Caco-2 (cell line): ENCODE measurements at regions of chr2 and their contacts with region 1.

Region 1: DNA sequence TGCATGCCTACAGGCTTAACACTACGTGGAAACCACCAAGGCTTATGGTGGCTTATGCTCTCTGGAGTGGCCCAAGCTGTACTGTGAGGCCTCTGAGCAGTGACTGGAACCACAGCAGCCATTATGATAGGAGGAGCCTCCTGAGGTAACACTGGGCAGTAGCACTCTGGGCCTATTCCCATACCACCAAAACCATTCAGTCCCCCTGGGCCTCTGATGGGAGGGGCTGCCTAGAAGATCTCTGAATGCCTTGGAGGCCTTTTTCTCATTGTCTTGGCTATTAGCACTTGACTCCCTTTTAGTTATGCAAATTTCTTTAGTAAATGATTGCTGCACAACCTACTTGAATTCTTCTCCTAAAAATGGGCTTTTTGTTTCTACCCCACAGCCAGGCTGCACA is 985.0 kb downstream of the DPP10 start:
- DNase-seq: no peak
- H3K4me3 ChIP-seq: no peak overlapping the region
- H3K4me3 Mint-ChIP-seq: no peak overlapping the region
- H3K27ac Mint-ChIP-seq: no peak overlapping the region
- H3K4me1 ChIP-seq: no peaks in the 10 kb centered on the region
- H3K4me1 Mint-ChIP-seq: no peaks in the 10 kb centered on the region
- H3K27me3 ChIP-seq: no peaks in the 10 kb centered on the region
- H3K27me3 Mint-ChIP-seq: peaks cover 8% of the 10 kb centered on the region
- CTCF ChIP-seq: no peak

Region 2: DNA sequence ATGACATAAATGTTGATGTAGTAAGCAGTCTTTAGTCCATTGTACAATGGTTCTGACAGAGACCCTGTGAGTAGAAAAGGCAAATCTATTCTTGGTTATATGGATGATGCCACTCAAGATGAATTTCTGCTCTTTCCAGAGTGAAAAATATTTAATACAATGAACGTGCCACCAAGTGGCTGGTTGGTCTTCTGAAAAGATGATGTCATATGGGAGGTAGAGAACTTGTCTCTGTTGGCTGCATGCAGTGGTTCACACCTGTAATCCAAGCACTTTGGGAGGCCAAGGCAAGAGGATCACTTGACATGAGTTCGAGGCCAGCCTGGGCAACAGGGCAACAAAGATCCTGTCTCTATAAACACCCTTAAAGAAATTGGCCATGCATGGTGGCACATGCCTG is 327.5 kb before region 1 on chr2:
- CTCF ChIA-PET with region 1: no interaction called
- POLR2A ChIA-PET with region 1: no interaction called
- intact Hi-C with region 1: loop called (anchors 5 kb)
- DNase-seq: no peak
- H3K4me3 ChIP-seq: no peak overlapping the region
- H3K4me3 Mint-ChIP-seq: no peak overlapping the region
- H3K27ac Mint-ChIP-seq: no peak overlapping the region
- H3K4me1 ChIP-seq: no peaks in the 10 kb centered on the region
- H3K4me1 Mint-ChIP-seq: no peaks in the 10 kb centered on the region
- H3K27me3 ChIP-seq: no peaks in the 10 kb centered on the region
- H3K27me3 Mint-ChIP-seq: no peaks in the 10 kb centered on the region
- CTCF ChIP-seq: no peak

Region 3: DNA sequence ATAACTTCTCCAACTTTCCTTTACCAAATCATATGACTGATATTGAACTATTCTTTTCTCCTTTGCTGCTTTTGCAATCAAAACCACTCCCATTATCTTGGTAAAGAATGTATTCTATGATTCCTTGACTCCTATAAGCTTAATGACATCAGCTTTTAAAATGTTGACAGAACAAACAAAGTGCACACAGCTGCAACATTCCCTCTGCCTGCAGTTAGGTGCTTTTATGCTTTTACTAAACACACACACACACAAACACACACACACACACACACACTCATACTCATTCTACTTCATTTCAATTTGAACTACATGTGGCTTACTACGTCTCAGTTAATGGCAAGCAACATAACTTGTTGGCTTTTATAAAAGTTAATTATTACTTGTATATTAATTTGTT is 38.4 kb before region 1 on chr2:
- CTCF ChIA-PET with region 1: no interaction called
- POLR2A ChIA-PET with region 1: no interaction called
- intact Hi-C with region 1: no loop called
- DNase-seq: no peak
- H3K4me3 ChIP-seq: no peak overlapping the region
- H3K4me3 Mint-ChIP-seq: no peak overlapping the region
- H3K27ac Mint-ChIP-seq: no peak overlapping the region
- H3K4me1 ChIP-seq: no peaks in the 10 kb centered on the region
- H3K4me1 Mint-ChIP-seq: no peaks in the 10 kb centered on the region
- H3K27me3 ChIP-seq: no peaks in the 10 kb centered on the region
- H3K27me3 Mint-ChIP-seq: no peaks in the 10 kb centered on the region
- CTCF ChIP-seq: no peak

Region 4: DNA sequence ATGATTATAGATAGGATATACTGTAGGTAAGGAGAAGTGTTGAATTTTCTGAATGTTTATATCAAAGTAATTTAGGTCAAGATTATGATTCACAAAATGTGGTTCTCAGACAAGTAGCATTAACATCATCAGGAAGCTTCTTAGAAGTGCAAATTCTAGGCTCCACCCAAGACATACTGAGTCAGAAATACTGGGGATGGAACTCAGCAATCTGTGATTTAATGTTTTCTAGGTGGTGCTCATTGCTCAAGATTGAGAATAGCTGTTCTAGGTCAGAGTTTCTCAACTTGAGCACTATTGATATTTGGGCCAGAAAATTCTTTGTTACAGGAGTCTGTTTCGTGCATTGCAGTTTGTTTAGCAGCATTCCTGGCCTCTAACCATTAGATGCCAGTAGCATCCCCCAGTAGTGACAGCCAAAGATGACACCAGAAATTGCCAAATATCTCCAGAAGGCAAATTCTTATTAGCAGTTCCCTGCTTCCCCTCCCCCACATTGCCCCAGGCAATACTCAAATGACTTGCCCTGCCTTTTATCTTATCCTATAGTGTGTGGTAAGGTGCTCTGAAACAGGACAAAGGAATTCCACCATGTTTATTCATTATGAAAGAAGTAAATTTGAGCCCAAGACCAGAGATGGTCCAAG is 16.2 kb after region 1 on chr2:
- CTCF ChIA-PET with region 1: no interaction called
- POLR2A ChIA-PET with region 1: no interaction called
- intact Hi-C with region 1: no loop called
- DNase-seq: peak; percentile 35 to 62
- H3K4me3 ChIP-seq: no peak overlapping the region
- H3K4me3 Mint-ChIP-seq: no peak overlapping the region
- H3K27ac Mint-ChIP-seq: no peak overlapping the region
- H3K4me1 ChIP-seq: 0 out of 2 replicates have a peak, but pooled peaks cover 5% of the 10 kb centered on the region
- H3K4me1 Mint-ChIP-seq: no peaks in the 10 kb centered on the region
- H3K27me3 ChIP-seq: no peaks in the 10 kb centered on the region
- H3K27me3 Mint-ChIP-seq: peaks cover 4% of the 10 kb centered on the region
- CTCF ChIP-seq: no peak